Ovary (tissue), 10 donors: ENCODE measurements at regions of chr11 and their contacts with region 1.

Region 1: GRCh38 chr11:5684646-5685362 is at the start of gene TRIM5:
- DNase-seq: peak; percentile 83 to 91 (median 86)
- H3K4me3 ChIP-seq: peak within 1 kb of the TSS; percentile 49
- H3K27ac ChIP-seq: peak within 1 kb of the TSS; percentile 87
- H3K4me1 ChIP-seq: peaks cover 5% of the 10 kb centered on the region
- H3K27me3 ChIP-seq: no peaks in the 10 kb centered on the region
- CTCF ChIP-seq: peak; percentile 69 to 79 (median 74)
- EP300 ChIP-seq: no peak
- POLR2A ChIP-seq: peak; percentile 65
- total RNA-seq, gene TRIM5: 16.8 to 35.8 (median 24.9) TPM

Region 2: DNA sequence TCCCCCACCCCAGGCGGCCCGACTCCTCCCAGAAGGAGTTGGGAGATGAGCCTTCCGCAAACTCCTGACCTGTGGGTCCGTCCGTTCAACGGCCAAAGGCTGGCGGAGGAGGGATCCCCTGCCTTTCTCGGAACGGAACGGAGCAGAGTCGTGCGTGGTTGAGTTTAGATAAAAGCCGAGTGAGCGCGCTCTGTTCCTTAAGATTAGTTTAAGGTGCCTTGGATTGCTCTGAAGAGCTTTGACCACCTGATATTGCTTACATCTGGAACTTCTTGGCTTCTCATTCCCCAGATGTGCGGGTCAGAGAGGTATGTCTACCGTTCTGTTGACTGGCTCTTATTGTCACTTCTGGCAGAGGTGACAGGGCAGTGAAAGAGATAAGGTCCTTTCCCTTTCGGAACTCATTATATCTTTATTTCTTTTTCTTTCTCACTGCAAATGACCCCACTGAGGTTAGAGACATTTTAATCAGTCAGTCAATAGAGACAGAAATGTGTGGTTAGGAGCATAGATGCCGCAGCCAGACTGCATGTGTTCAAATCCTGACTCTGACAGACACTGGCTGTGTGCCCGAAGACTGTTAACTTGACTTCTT is 88.1 kb before region 1 on chr11 and contains the start of gene TRIM6:
- intact Hi-C with region 1: loop called in 1 of 4 experiments (anchors 10 kb)
- DNase-seq: peak; percentile 71 to 83 (median 74)
- H3K4me3 ChIP-seq: peak within 1 kb of the TSS; percentile 40
- H3K27ac ChIP-seq: peak within 1 kb of the TSS in 1 of 2 donors; percentile 55
- H3K4me1 ChIP-seq: peaks cover 7% of the 10 kb centered on the region
- H3K27me3 ChIP-seq: no peaks in the 10 kb centered on the region
- CTCF ChIP-seq: no peak
- EP300 ChIP-seq: no peak
- POLR2A ChIP-seq: no peak
- total RNA-seq, gene TRIM6: 2.3 to 6.3 (median 4.2) TPM